ENCODE measurements at regions of chr7 and their contacts with region 1.

Region 1: GRCh38 chr7:150404805-150405583 is 25.9 kb downstream of the ZNF775 start:
- DNase-seq: peak; percentile 56 to 92 (median 72)
- ATAC-seq: peak; percentile 82
- H3K4me3 ChIP-seq: peak overlapping the region; percentile 90
- H3K4me3 Mint-ChIP-seq: peak overlapping the region; percentile 94
- H3K27ac ChIP-seq: peak overlapping the region; percentile 88 to 89
- H3K27ac Mint-ChIP-seq: peak overlapping the region; percentile 82
- H3K4me1 ChIP-seq: peaks cover 34% of the 10 kb centered on the region
- H3K4me1 Mint-ChIP-seq: peaks cover 37% of the 10 kb centered on the region
- H3K27me3 ChIP-seq: no peaks in the 10 kb centered on the region
- H3K27me3 Mint-ChIP-seq: no peaks in the 10 kb centered on the region
- CTCF ChIP-seq: no peak

Region 2: DNA sequence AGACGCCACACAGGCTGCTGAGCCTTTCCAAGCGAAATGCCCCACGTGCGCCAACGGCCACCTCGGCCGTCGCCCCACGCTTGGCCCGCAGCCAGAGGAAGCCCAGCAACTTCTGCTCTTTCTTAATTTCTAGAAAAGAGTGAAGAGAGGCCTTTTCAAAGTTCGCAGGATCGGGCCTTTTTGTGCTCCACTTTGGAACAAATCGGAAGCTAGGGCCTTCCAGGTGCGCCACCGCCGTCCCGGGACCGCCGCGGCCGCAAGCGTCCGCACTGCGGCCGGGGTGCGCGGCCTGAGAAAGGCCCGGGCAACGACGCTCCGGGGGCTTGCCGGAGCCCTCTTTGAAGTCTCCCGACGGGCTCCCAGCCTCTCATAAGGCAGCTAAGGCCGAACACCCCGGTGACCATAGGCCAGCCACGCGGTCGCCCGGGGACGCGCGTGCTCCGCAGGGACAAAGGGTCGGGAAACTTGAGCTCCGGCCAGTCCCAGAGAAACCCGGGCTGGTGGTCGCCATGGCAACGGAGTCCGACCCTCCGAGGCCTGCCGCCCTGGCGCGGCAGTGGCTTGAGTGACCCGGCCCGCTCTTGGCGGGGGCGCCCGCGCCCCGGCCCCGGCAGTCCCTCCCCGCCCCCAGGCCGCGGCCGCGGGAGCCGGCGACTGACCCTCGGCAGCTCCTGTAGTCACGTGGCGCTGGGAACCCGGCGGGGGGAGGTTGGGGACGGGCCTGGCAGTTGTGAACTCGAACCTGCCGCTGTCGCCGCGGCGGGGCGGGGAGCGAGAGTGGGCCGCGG is 36.7 kb before region 1 on chr7 and contains the start of gene REPIN1:
- CTCF ChIA-PET with region 1: interaction called, 20 read pairs
- POLR2A ChIA-PET with region 1: interaction called, 76 read pairs
- intact Hi-C with region 1: loop called in 1 of 2 experiments (anchors 2 kb)
- DNase-seq: peak; percentile 58 to 91 (median 73)
- ATAC-seq: peak; percentile 45
- H3K4me3 ChIP-seq: peak within 1 kb of the TSS; percentile 83
- H3K4me3 Mint-ChIP-seq: peak within 1 kb of the TSS; percentile 99
- H3K27ac ChIP-seq: peak within 1 kb of the TSS; percentile 40 to 80
- H3K27ac Mint-ChIP-seq: peak within 1 kb of the TSS; percentile 96
- H3K4me1 ChIP-seq: peaks cover 47% of the 10 kb centered on the region
- H3K4me1 Mint-ChIP-seq: peaks cover 61% of the 10 kb centered on the region
- H3K27me3 ChIP-seq: no peaks in the 10 kb centered on the region
- H3K27me3 Mint-ChIP-seq: no peaks in the 10 kb centered on the region
- CTCF ChIP-seq: no peak
- total RNA-seq, gene REPIN1: 58.2 to 59.8 TPM

Region 3: GRCh38 chr7:150378853-150379440 is 26.0 kb before region 1 on chr7 and contains the start of gene ZNF775:
- CTCF ChIA-PET with region 1: interaction called, 3 read pairs
- POLR2A ChIA-PET with region 1: interaction called, 15 read pairs
- intact Hi-C with region 1: loop called (anchors 1 to 2 kb)
- DNase-seq: peak; percentile 80 to 95 (median 90)
- ATAC-seq: peak; percentile 94
- H3K4me3 ChIP-seq: peak within 1 kb of the TSS; percentile 85
- H3K4me3 Mint-ChIP-seq: peak within 1 kb of the TSS; percentile 90
- H3K27ac ChIP-seq: peak within 1 kb of the TSS; percentile 54 to 55
- H3K27ac Mint-ChIP-seq: peak within 1 kb of the TSS; percentile 84
- H3K4me1 ChIP-seq: peaks cover 46% of the 10 kb centered on the region
- H3K4me1 Mint-ChIP-seq: peaks cover 65% of the 10 kb centered on the region
- H3K27me3 ChIP-seq: no peaks in the 10 kb centered on the region
- H3K27me3 Mint-ChIP-seq: no peaks in the 10 kb centered on the region
- CTCF ChIP-seq: no peak
- total RNA-seq, gene ZNF775: 0.38 to 0.45 TPM

Region 4: GRCh38 chr7:150420987-150421674 is 16.1 kb after region 1 on chr7:
- CTCF ChIA-PET with region 1: interaction called, 9 read pairs
- POLR2A ChIA-PET with region 1: interaction called, 3 read pairs
- intact Hi-C with region 1: loop called in 1 of 2 experiments (anchors 1 kb)
- DNase-seq: peak; percentile 77 to 94 (median 86)
- ATAC-seq: peak; percentile 99
- H3K4me3 ChIP-seq: no peak overlapping the region
- H3K4me3 Mint-ChIP-seq: peak overlapping the region; percentile 18
- H3K27ac ChIP-seq: no peak overlapping the region
- H3K27ac Mint-ChIP-seq: no peak overlapping the region
- H3K4me1 ChIP-seq: peaks cover 9% of the 10 kb centered on the region
- H3K4me1 Mint-ChIP-seq: peaks cover 7% of the 10 kb centered on the region
- H3K27me3 ChIP-seq: no peaks in the 10 kb centered on the region
- H3K27me3 Mint-ChIP-seq: no peaks in the 10 kb centered on the region
- CTCF ChIP-seq: peak; percentile 95

Region 5: DNA sequence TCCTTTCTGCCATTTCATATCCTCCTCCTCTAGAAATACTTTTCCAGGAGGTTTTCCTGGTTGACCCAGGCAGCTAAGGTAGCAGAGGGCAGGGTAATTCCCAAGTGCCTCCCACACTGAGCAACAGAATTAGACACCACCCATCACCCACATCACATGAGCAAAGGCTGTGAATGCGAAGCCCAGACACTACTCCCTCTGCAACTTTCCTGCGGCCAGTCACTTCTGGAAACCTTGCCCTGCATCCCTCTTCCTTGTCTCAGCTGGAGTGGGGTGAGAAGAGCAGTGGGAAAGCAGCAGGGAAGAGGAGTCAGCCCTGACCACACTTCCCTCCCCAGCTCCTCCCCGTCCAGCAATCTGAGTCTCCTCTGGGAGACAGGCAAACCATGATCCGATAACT is 380.0 kb after region 1 on chr7:
- CTCF ChIA-PET with region 1: no interaction called
- POLR2A ChIA-PET with region 1: no interaction called
- intact Hi-C with region 1: no loop called
- DNase-seq: peak in 1 of 14 experiments; percentile 37
- ATAC-seq: no peak
- H3K4me3 ChIP-seq: no peak overlapping the region
- H3K4me3 Mint-ChIP-seq: no peak overlapping the region
- H3K27ac ChIP-seq: no peak overlapping the region
- H3K27ac Mint-ChIP-seq: no peak overlapping the region
- H3K4me1 ChIP-seq: no peaks in the 10 kb centered on the region
- H3K4me1 Mint-ChIP-seq: no peaks in the 10 kb centered on the region
- H3K27me3 ChIP-seq: peaks cover 0 to 3% of the 10 kb centered on the region in 2 experiments
- H3K27me3 Mint-ChIP-seq: peaks cover 10% of the 10 kb centered on the region
- CTCF ChIP-seq: no peak

Measured in CD4-positive, alpha-beta T cell (primary cell).